Gastrocnemius medialis (tissue), 4 donors: ENCODE measurements at regions of chr11 and their contacts with region 1.

Region 1: GRCh38 chr11:112588252-112588694 is 327.6 kb upstream of the PLET1 start:
- DNase-seq: peak; percentile 40 to 60
- ATAC-seq: peak; percentile 87 to 89
- H3K4me3 ChIP-seq: no peak overlapping the region
- H3K27ac ChIP-seq: no peak overlapping the region
- H3K4me1 ChIP-seq: peaks cover 0 to 8% of the 10 kb centered on the region in 2 donors
- H3K27me3 ChIP-seq: no peaks in the 10 kb centered on the region
- CTCF ChIP-seq: peak; percentile 70 to 79 (median 74)
- POLR2A ChIP-seq: no peak

Region 2: GRCh38 chr11:112724496-112724790 is 136.2 kb after region 1 on chr11:
- in situ Hi-C with region 1: no loop called
- intact Hi-C with region 1: no loop called
- DNase-seq: no peak
- ATAC-seq: no peak
- H3K4me3 ChIP-seq: no peak overlapping the region
- H3K27ac ChIP-seq: no peak overlapping the region
- H3K4me1 ChIP-seq: no peaks in the 10 kb centered on the region
- H3K27me3 ChIP-seq: no peaks in the 10 kb centered on the region
- CTCF ChIP-seq: no peak
- POLR2A ChIP-seq: no peak

Region 3: GRCh38 chr11:112784323-112785073 is 196.2 kb after region 1 on chr11:
- in situ Hi-C with region 1: no loop called
- intact Hi-C with region 1: loop called (anchors 5 kb)
- DNase-seq: peak in 1 of 2 donors; percentile 28
- ATAC-seq: peak in 1 of 2 donors; percentile 31
- H3K4me3 ChIP-seq: peak overlapping the region in 2 of 4 donors; percentile 9 to 10
- H3K27ac ChIP-seq: no peak overlapping the region
- H3K4me1 ChIP-seq: peaks cover 14 to 15% of the 10 kb centered on the region in 2 donors
- H3K27me3 ChIP-seq: no peaks in the 10 kb centered on the region
- CTCF ChIP-seq: no peak
- POLR2A ChIP-seq: no peak

Region 4: GRCh38 chr11:112795142-112795815 is 207.0 kb after region 1 on chr11:
- in situ Hi-C with region 1: loop called (anchors 5 to 10 kb)
- intact Hi-C with region 1: loop called (anchors 1 kb)
- DNase-seq: peak in 1 of 2 donors; percentile 64
- ATAC-seq: peak; percentile 76 to 79
- H3K4me3 ChIP-seq: no peak overlapping the region
- H3K27ac ChIP-seq: peak overlapping the region in 2 of 4 donors; percentile 44 to 55
- H3K4me1 ChIP-seq: peaks cover 8 to 24% of the 10 kb centered on the region in 2 donors
- H3K27me3 ChIP-seq: no peaks in the 10 kb centered on the region
- CTCF ChIP-seq: peak; percentile 67 to 82 (median 70)
- POLR2A ChIP-seq: no peak

Region 5: GRCh38 chr11:112961146-112961668 is 372.9 kb after region 1 on chr11 and contains the start of gene NCAM1:
- in situ Hi-C with region 1: loop called in 1 of 4 experiments (anchors 25 kb)
- intact Hi-C with region 1: no loop called
- DNase-seq: peak; percentile 43 to 64
- ATAC-seq: peak; percentile 39 to 47
- H3K4me3 ChIP-seq: peak within 1 kb of the TSS; percentile 52 to 65 (median 55)
- H3K27ac ChIP-seq: peak within 1 kb of the TSS in 3 of 4 donors; percentile 10 to 41 (median 18)
- H3K4me1 ChIP-seq: peaks cover 5 to 21% of the 10 kb centered on the region in 2 donors
- H3K27me3 ChIP-seq: peaks cover 8 to 76% (median 44%) of the 10 kb centered on the region in 3 donors
- CTCF ChIP-seq: no peak
- POLR2A ChIP-seq: no peak
- total RNA-seq, gene NCAM1: 12.8 to 27.7 (median 15.7) TPM

Region 6: DNA sequence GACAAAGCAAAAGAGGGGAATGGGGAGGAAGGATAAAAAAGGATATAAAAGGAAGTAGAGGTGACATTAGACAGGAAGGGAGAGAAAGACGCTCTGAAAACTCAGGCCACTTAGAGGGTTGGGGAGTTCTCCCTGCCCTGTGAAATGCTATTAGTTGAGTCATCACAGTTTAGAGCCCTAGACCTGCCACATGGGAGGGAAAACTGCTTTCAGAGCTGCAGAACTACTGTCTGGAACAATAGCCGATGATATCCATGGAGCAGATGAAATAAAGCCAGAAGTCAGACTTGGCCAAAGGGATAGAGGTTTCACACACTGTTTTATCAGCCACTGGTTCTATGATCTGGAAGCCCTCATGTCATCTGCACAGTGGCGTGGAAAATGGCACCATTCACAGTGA is 530.8 kb after region 1 on chr11:
- in situ Hi-C with region 1: loop called (anchors 5 to 25 kb)
- intact Hi-C with region 1: loop called (anchors 1 kb)
- DNase-seq: no peak
- ATAC-seq: peak in 1 of 2 donors; percentile 61
- H3K4me3 ChIP-seq: no peak overlapping the region
- H3K27ac ChIP-seq: no peak overlapping the region
- H3K4me1 ChIP-seq: peaks cover 2 to 7% of the 10 kb centered on the region in 2 donors
- H3K27me3 ChIP-seq: no peaks in the 10 kb centered on the region
- CTCF ChIP-seq: no peak
- POLR2A ChIP-seq: no peak